ENCODE measurements at regions of chrX and their contacts with region 1.

Region 1: DNA sequence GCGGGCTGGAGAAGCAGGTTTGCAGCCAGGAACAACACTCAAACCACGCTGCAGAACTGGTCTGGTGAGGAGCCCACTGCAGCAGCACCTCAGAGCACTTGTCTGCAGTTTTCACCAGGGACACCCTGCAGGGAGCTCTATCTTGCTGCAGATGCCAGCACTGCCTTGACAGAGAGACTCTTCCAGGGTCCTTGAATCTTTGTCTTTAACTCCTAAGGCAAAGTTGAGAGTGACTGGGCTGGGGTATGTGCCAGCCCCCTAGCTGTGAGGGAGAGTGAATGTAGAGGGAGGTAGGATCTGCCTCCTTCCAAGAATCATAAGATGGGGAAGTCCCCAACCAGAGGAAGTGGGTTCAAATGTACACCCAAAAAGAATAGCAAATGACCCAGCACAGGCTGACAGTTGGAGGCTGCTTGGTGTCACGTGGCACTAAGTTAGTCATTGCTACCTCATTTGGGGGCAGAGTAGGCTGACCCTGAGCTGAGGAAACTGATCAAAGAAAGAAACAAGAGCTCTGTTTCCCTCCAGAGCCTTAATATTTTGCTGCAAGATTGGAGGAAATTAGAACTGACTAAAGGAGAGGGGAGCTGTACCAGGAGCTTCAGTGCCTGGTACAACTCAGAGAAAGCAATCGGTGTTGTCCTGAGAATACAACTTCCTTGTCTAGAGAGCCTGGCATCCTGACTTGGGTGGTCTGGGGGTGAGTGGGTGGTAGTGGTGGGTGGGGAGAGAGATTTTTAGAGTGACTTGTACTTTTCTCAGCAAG is 28.2 kb upstream of the HUWE1 start:
- DNase-seq: peak; percentile 77
- H3K4me3 Mint-ChIP-seq: peak overlapping the region; percentile 85
- H3K27ac Mint-ChIP-seq: peak overlapping the region; percentile 94
- H3K4me1 Mint-ChIP-seq: peaks cover 34% of the 10 kb centered on the region
- H3K27me3 Mint-ChIP-seq: no peaks in the 10 kb centered on the region

Region 2: DNA sequence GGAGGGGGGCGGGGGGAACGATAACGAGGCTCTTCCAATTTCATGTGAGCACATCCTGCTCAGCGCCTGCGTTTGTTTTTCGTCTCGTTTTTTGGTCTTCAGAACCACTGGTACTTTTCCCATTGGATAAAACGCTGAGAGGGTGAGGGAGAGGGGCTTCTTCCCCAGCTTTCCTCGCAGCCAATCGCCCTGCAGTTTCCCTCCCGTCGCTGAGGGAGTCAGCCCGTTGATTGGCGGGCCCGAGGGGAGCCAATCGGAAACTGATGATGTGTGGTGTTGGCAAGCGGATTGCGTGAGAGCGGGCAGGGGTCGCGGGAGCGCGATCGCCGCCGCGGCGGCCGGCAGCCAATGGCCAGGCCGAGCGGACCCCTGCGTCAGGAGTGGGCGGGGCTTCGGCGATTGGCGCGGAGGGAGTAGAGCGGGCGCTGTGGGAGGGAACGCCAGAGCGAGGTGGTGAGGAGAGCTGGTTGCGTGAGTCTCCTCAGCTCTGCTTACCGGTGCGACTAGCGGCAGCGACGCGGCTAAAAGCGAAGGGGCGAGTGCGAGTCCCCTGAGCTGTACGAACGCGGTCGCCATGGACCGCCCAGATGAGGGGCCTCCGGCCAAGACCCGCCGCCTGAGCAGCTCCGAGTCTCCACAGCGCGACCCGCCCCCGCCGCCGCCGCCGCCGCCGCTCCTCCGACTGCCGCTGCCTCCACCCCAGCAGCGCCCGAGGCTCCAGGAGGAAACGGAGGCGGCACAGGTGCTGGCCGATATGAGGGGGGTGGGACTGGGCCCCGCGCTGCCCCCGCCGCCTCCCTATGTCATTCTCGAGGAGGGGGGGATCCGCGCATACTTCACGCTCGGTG is 632.6 kb before region 1 on chrX and contains the start of gene TSPYL2:
- CTCF ChIA-PET with region 1: no interaction called
- intact Hi-C with region 1: loop called (anchors 10 kb)
- DNase-seq: peak; percentile 93
- H3K4me3 Mint-ChIP-seq: peak within 1 kb of the TSS; percentile 90
- H3K27ac Mint-ChIP-seq: peak within 1 kb of the TSS; percentile 94
- H3K4me1 Mint-ChIP-seq: peaks cover 48% of the 10 kb centered on the region
- H3K27me3 Mint-ChIP-seq: no peaks in the 10 kb centered on the region
- total RNA-seq, gene TSPYL2: 72.2 to 74.4 TPM

Region 3: GRCh38 chrX:53683556-53684414 is 31.0 kb before region 1 on chrX:
- CTCF ChIA-PET with region 1: interaction called, 11 read pairs
- intact Hi-C with region 1: loop called (anchors 1 kb)
- DNase-seq: peak; percentile 96
- H3K4me3 Mint-ChIP-seq: peak overlapping the region; percentile 92
- H3K27ac Mint-ChIP-seq: peak overlapping the region; percentile 94
- H3K4me1 Mint-ChIP-seq: peaks cover 27% of the 10 kb centered on the region
- H3K27me3 Mint-ChIP-seq: no peaks in the 10 kb centered on the region

Region 4: GRCh38 chrX:53732797-53733196 is 18.0 kb after region 1 on chrX:
- CTCF ChIA-PET with region 1: interaction called, 6 read pairs
- intact Hi-C with region 1: loop called (anchors 1 kb)
- DNase-seq: peak; percentile 62
- H3K4me3 Mint-ChIP-seq: peak overlapping the region; percentile 32
- H3K27ac Mint-ChIP-seq: peak overlapping the region; percentile 99
- H3K4me1 Mint-ChIP-seq: peaks cover 55% of the 10 kb centered on the region
- H3K27me3 Mint-ChIP-seq: no peaks in the 10 kb centered on the region

Region 5: GRCh38 chrX:53738370-53738906 is 23.7 kb after region 1 on chrX:
- CTCF ChIA-PET with region 1: no interaction called
- intact Hi-C with region 1: loop called (anchors 1 kb)
- DNase-seq: no peak
- H3K4me3 Mint-ChIP-seq: no peak overlapping the region
- H3K27ac Mint-ChIP-seq: peak overlapping the region; percentile 54
- H3K4me1 Mint-ChIP-seq: peaks cover 44% of the 10 kb centered on the region
- H3K27me3 Mint-ChIP-seq: no peaks in the 10 kb centered on the region

Region 6: GRCh38 chrX:53831662-53832635 is 117.2 kb after region 1 on chrX:
- CTCF ChIA-PET with region 1: interaction called, 5 read pairs
- intact Hi-C with region 1: loop called (anchors 1 kb)
- DNase-seq: peak; percentile 70
- H3K4me3 Mint-ChIP-seq: peak overlapping the region; percentile 42
- H3K27ac Mint-ChIP-seq: peak overlapping the region; percentile 81
- H3K4me1 Mint-ChIP-seq: peaks cover 18% of the 10 kb centered on the region
- H3K27me3 Mint-ChIP-seq: no peaks in the 10 kb centered on the region

Region 7: GRCh38 chrX:54182864-54183608 is 468.3 kb after region 1 on chrX and contains the start of gene FAM120C:
- CTCF ChIA-PET with region 1: no interaction called
- intact Hi-C with region 1: loop called (anchors 10 kb)
- DNase-seq: peak; percentile 66
- H3K4me3 Mint-ChIP-seq: peak within 1 kb of the TSS; percentile 75
- H3K27ac Mint-ChIP-seq: peak within 1 kb of the TSS; percentile 84
- H3K4me1 Mint-ChIP-seq: peaks cover 38% of the 10 kb centered on the region
- H3K27me3 Mint-ChIP-seq: no peaks in the 10 kb centered on the region
- total RNA-seq, gene FAM120C: 4.3 to 5.9 TPM

Region 8: DNA sequence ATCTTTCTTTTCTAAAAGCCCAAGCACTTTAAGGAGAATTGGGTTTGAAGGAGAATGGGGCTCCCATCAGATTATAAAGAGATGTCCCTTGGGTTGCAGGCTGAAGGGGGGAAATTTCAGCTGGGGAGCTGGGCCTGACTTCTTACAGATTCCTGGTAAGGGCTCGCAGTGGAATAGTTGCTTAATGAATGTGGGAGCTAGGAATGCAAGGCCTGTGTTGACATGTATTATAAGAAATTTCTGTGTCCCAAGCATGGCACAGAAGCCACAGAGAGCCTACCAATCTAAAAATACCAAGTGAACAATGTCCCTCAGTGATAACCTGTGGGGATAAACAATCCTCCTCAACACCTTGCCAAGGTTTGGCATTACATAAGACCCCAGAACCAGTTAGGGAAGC is 682.4 kb after region 1 on chrX:
- CTCF ChIA-PET with region 1: no interaction called
- intact Hi-C with region 1: no loop called
- DNase-seq: no peak
- H3K4me3 Mint-ChIP-seq: no peak overlapping the region
- H3K27ac Mint-ChIP-seq: no peak overlapping the region
- H3K4me1 Mint-ChIP-seq: no peaks in the 10 kb centered on the region
- H3K27me3 Mint-ChIP-seq: no peaks in the 10 kb centered on the region